ENCODE measurements at regions of chr21 and their contacts with region 1.

Region 1: GRCh38 chr21:34693192-34693810 is 24.5 kb downstream of the CLIC6 start:
- DNase-seq: peak; percentile 22
- H3K4me3 Mint-ChIP-seq: no peak overlapping the region
- H3K27ac Mint-ChIP-seq: no peak overlapping the region
- H3K4me1 Mint-ChIP-seq: peaks cover 5% of the 10 kb centered on the region
- H3K27me3 Mint-ChIP-seq: peaks cover 32% of the 10 kb centered on the region

Region 2: GRCh38 chr21:34545079-34545884 is 148.0 kb before region 1 on chr21:
- intact Hi-C with region 1: no loop called
- DNase-seq: no peak
- H3K4me3 Mint-ChIP-seq: no peak overlapping the region
- H3K27ac Mint-ChIP-seq: peak overlapping the region; percentile 81
- H3K4me1 Mint-ChIP-seq: peaks cover 32% of the 10 kb centered on the region
- H3K27me3 Mint-ChIP-seq: no peaks in the 10 kb centered on the region

Region 3: GRCh38 chr21:35840197-35840799 is 1147.0 kb after region 1 on chr21:
- intact Hi-C with region 1: loop called (anchors 2 kb)
- DNase-seq: peak; percentile 23
- H3K4me3 Mint-ChIP-seq: no peak overlapping the region
- H3K27ac Mint-ChIP-seq: no peak overlapping the region
- H3K4me1 Mint-ChIP-seq: no peaks in the 10 kb centered on the region
- H3K27me3 Mint-ChIP-seq: peaks cover 8% of the 10 kb centered on the region

Region 4: DNA sequence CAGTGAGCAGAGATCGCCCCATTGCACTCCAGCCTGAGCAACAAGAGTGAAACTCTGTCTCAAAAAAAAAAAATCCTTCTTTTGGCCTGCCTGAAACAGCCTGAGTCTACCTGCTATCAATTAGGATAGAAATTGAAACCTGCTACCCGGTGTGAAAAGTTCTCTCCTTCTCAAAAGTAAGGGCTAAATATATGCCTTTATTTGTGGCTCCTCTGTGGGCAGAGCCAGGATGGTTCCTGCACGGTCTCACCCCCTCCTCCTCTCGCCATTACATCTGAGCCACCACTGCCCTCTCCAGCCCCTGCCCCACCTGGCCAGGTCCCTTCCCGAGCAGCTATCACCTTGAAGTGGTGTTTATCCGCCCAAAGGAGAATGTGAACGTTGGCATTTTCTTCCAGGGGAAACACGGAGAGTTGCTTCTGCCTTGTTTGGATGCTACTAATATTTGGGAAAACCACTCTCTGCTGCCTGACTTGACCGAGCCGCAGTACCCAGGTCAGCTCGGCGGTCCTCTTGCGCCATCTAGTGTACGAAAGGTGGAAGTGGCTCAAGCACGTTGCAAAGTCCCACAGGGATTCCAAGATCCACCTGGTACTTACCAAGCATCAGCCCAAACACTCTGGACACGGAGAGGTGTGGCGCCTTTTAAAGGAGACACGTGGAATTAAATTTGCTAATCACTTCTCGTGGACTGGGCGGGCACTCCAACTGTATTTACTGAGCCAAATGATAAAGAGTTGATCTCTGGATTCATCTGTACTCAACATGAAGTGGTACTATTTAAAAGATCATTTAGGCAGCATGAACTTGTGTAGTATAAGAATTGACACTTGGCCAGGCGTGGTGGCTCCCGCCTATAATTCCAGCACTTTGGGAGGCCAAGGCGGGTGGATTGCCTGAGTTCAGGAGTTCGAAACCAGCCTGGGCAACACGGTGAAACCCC is 1335.1 kb after region 1 on chr21:
- intact Hi-C with region 1: loop called (anchors 5 kb)
- DNase-seq: peak; percentile 53
- H3K4me3 Mint-ChIP-seq: no peak overlapping the region
- H3K27ac Mint-ChIP-seq: no peak overlapping the region
- H3K4me1 Mint-ChIP-seq: peaks cover 5% of the 10 kb centered on the region
- H3K27me3 Mint-ChIP-seq: no peaks in the 10 kb centered on the region

Measured in activated T-helper 2 cell treated with anti-CD3 and anti-CD28 coated beads, Interferon-gamma antibody, Interleukin-2, Interleukin-4, amounts not matched to agents 10 μg/mL and 5 μg/mL and 100 μg/mL, durations not matched to agents 14 hours and 24 hours and 36 hours (primary cell).